Mammary epithelial cell (primary cell): ENCODE measurements at regions of chr2 and their contacts with region 1.

Region 1: GRCh38 chr2:10408649-10409579 is 39.2 kb downstream of the ODC1 start:
- DNase-seq: peak; percentile 73
- H3K4me3 ChIP-seq: no peak overlapping the region
- H3K27ac ChIP-seq: peak overlapping the region; percentile 98
- H3K4me1 ChIP-seq: peaks cover 74% of the 10 kb centered on the region
- H3K27me3 ChIP-seq: no peaks in the 10 kb centered on the region
- CTCF ChIP-seq: peak; percentile 79 to 99

Region 2: GRCh38 chr2:10079870-10080535 is 328.9 kb before region 1 on chr2 and contains the start of gene CYS1:
- CTCF ChIA-PET with region 1: interaction called, 3 read pairs
- dilution Hi-C with region 1: loop called (anchors 5 kb)
- in situ Hi-C with region 1: loop called in 1 of 2 experiments (anchors 10 kb)
- intact Hi-C with region 1: no loop called
- DNase-seq: no peak
- H3K4me3 ChIP-seq: peak within 1 kb of the TSS in 2 of 3 experiments; percentile 38 to 39
- H3K27ac ChIP-seq: no peak within 1 kb of the TSS
- H3K4me1 ChIP-seq: peaks cover 8% of the 10 kb centered on the region
- H3K27me3 ChIP-seq: peaks cover 17% of the 10 kb centered on the region
- CTCF ChIP-seq: no peak
- total RNA-seq, gene CYS1: 0.73 to 3.5 TPM

Region 3: DNA sequence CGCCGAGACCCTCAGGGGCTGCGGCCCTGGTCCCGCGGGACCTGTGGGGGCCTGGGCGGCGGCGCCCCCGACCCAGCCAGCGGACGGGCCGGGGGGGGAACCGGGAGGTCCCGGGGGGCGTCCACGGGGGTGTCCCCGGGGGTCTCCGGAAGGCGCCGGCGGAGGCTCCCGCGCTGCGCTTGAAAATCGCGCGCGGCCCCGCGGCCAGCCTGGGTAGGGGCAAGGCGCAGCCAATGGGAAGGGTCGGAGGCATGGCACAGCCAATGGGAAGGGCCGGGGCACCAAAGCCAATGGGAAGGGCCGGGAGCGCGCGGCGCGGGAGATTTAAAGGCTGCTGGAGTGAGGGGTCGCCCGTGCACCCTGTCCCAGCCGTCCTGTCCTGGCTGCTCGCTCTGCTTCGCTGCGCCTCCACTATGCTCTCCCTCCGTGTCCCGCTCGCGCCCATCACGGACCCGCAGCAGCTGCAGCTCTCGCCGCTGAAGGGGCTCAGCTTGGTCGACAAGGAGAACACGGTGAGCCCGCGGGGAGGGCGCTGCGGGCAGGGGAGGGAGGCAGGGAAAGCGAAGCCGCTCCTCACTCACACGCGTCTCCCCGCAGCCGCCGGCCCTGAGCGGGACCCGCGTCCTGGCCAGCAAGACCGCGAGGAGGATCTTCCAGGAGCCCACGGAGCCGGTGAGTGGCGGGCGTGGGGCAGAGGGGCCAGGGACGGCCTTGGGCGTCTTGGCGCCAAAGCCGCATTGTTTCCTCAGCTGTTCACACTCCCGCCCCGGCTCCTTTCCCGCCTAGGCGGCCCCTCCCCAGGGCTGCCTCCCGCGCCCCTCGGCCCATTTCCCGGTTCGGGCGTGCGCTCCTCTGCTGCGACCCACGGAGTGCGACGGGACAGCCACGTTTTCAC is 286.3 kb before region 1 on chr2 and contains the start of gene RRM2:
- CTCF ChIA-PET with region 1: interaction called, 9 read pairs
- dilution Hi-C with region 1: no loop called
- in situ Hi-C with region 1: loop called in 1 of 2 experiments (anchors 5 kb)
- intact Hi-C with region 1: loop called (anchors 1 kb)
- DNase-seq: peak; percentile 88
- H3K4me3 ChIP-seq: peak within 1 kb of the TSS; percentile 43 to 93 (median 88)
- H3K27ac ChIP-seq: peak within 1 kb of the TSS; percentile 75
- H3K4me1 ChIP-seq: peaks cover 35% of the 10 kb centered on the region
- H3K27me3 ChIP-seq: no peaks in the 10 kb centered on the region
- CTCF ChIP-seq: no peak
- total RNA-seq, gene RRM2: 4.0 to 103 TPM

Region 4: GRCh38 chr2:10141736-10142642 is 266.9 kb before region 1 on chr2:
- CTCF ChIA-PET with region 1: interaction called, 5 read pairs
- dilution Hi-C with region 1: no loop called
- in situ Hi-C with region 1: loop called in 1 of 2 experiments (anchors 10 kb)
- intact Hi-C with region 1: loop called (anchors 1 kb)
- DNase-seq: no peak
- H3K4me3 ChIP-seq: no peak overlapping the region
- H3K27ac ChIP-seq: no peak overlapping the region
- H3K4me1 ChIP-seq: peaks cover 10% of the 10 kb centered on the region
- H3K27me3 ChIP-seq: no peaks in the 10 kb centered on the region
- CTCF ChIP-seq: peak; percentile 49 to 70

Region 5: DNA sequence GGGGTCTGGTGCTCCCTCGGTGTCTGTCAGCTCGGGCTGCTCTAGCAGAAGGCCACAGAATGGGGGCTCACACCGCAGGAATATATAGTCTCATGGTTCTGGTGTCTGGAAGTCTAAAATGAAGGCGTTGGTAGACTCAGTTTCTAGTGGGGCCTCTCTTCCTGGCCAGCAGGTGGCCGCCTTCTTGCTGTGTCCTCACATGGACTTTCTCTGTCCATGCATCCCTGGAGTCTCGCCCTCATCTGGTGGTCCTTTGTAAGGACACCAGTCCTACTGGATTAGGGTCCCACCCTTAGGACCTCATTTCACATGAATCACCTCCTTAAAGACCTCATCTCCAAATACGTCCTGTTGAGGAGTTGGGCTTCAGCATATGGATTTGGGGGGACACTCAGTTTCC is 220.7 kb before region 1 on chr2:
- CTCF ChIA-PET with region 1: no interaction called
- dilution Hi-C with region 1: no loop called
- in situ Hi-C with region 1: no loop called
- intact Hi-C with region 1: loop called (anchors 1 kb)
- DNase-seq: peak; percentile 12
- H3K4me3 ChIP-seq: no peak overlapping the region
- H3K27ac ChIP-seq: no peak overlapping the region
- H3K4me1 ChIP-seq: no peaks in the 10 kb centered on the region
- H3K27me3 ChIP-seq: no peaks in the 10 kb centered on the region
- CTCF ChIP-seq: peak; percentile 15 to 25

Region 6: GRCh38 chr2:10266133-10266620 is 142.7 kb before region 1 on chr2:
- CTCF ChIA-PET with region 1: no interaction called
- dilution Hi-C with region 1: no loop called
- in situ Hi-C with region 1: no loop called
- intact Hi-C with region 1: loop called (anchors 1 kb)
- DNase-seq: no peak
- H3K4me3 ChIP-seq: no peak overlapping the region
- H3K27ac ChIP-seq: no peak overlapping the region
- H3K4me1 ChIP-seq: peaks cover 9% of the 10 kb centered on the region
- H3K27me3 ChIP-seq: no peaks in the 10 kb centered on the region
- CTCF ChIP-seq: no peak

Region 7: DNA sequence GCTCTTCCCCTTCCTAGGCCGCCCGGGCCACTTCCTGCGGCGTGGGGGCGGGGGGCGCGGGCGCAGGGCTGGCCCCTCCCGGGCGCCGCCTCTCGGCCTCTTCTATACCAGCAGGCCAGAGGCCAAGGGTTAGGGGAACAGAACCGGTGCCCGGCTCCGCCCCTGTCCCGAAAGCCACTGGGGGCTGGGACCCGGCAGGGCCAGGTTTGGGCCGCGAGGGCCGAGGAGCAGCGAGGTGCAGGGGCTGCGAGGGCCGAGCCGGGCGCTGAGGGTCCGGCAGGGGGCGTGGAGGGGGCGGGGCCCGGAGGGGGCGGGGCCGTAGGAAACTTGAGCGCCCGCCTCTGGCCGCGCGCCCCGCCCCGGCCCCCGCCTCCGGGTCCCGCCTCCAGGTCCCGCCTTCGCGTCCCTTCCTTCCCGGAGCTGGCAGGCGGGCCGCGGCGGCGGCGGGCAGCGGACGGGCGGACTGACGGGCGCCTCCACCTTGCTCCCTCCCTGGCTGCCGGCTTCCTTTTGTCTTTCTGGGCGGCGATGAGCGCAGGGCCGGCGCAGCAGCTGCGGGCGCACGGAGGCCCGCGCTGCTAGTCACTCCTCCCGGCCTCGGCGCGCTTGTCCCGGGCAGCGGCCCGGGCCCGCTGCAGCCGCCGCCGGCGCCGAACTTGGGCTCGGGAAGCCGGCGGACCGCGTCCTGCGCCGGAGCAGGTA is 106.3 kb before region 1 on chr2 and contains the start of gene HPCAL1:
- CTCF ChIA-PET with region 1: interaction called, 8 read pairs
- dilution Hi-C with region 1: no loop called
- in situ Hi-C with region 1: loop called in 1 of 2 experiments (anchors 10 kb)
- intact Hi-C with region 1: loop called (anchors 1 kb)
- DNase-seq: peak; percentile 80
- H3K4me3 ChIP-seq: peak within 1 kb of the TSS; percentile 58 to 89 (median 87)
- H3K27ac ChIP-seq: no peak within 1 kb of the TSS
- H3K4me1 ChIP-seq: peaks cover 19% of the 10 kb centered on the region
- H3K27me3 ChIP-seq: no peaks in the 10 kb centered on the region
- CTCF ChIP-seq: peak; percentile 28 to 65
- total RNA-seq, gene HPCAL1: 26.3 to 82.8 TPM

Region 8: DNA sequence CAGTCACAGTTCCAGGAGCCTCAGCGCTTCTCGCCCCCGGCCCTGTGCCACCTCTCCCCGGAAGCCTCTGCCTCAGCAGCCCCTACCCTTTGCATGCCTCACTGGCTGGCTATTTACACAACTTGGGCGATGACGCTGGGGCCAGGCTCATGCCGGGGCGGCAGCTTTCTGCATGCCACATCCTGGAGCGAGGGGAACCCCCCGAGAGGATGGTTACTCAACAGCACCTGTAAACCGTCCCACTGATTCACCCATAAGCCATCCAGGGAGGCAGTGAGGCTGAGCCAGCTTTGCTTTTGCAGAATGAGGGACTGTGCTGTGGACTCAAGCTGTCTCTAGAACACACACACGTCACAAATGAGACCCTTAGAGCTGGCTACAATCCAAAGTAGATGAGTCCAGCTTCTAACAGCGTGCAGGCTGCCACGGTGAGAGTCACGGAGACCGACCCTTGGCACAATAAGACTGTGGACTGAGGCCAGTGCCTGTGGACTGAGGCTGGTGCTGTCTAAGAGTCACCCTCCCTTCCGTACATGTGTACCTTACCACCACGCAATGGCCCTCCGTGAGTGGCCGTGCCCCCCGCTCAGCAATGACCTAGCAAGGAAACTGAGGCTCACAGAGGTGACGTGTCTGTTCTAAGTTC is 84.8 kb after region 1 on chr2:
- CTCF ChIA-PET with region 1: no interaction called
- dilution Hi-C with region 1: no loop called
- in situ Hi-C with region 1: no loop called
- intact Hi-C with region 1: no loop called
- DNase-seq: peak; percentile 99
- H3K4me3 ChIP-seq: no peak overlapping the region
- H3K27ac ChIP-seq: peak overlapping the region; percentile 91
- H3K4me1 ChIP-seq: peaks cover 37% of the 10 kb centered on the region
- H3K27me3 ChIP-seq: no peaks in the 10 kb centered on the region
- CTCF ChIP-seq: no peak

Region 9: GRCh38 chr2:10620481-10620880 is 211.6 kb after region 1 on chr2:
- CTCF ChIA-PET with region 1: no interaction called
- dilution Hi-C with region 1: no loop called
- in situ Hi-C with region 1: no loop called
- intact Hi-C with region 1: no loop called
- DNase-seq: peak; percentile 68
- H3K4me3 ChIP-seq: no peak overlapping the region
- H3K27ac ChIP-seq: no peak overlapping the region
- H3K4me1 ChIP-seq: peaks cover 5% of the 10 kb centered on the region
- H3K27me3 ChIP-seq: no peaks in the 10 kb centered on the region
- CTCF ChIP-seq: no peak